ENCODE measurements at regions of chr16 and their contacts with region 1.

Region 1: DNA sequence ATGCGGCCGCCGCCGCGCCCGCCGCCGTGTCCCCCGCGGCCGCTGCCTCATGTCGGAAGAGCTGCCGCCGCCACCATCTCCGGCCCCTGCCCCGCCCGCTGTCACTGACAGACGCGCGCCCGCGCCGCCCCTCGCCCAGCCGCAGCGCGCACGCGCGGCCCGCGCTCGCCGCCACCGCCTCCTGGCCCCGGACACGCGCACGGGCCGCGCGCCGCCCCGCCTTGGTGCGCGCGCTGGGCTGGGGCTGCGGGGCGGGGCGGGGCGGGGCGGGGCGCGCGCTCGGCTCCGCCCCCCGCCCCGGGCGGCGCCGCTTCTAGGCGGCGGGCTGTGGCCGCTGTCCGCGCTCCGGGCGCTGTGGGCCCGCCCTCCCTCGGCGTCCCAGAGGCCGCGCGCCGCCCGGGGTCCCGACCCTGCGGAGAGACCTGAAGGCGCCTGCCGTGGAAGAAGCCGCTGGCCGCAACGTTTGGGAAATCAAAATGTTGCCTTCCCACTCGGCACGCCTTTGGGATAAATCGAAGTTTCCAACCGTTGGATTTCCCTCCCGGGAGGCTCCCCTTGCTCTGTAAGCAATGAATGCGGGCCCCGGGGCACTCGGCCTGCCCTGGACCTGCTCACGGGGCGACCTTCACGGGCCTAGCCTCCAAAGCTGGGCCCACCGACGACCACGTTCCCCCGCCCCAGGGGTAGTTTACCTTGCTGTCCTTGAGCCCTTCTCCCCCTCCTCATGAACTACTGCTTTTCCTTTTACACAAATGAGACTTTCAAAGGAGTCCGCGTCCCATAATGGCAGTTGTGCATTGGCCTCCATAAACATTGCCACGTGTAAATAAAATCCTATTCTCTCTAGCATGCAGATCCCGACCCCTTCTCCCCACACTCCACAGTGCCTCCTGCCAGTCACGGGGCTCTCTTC is at the start of gene ADCY9:
- DNase-seq: peak; percentile 86 to 90
- ATAC-seq: peak; percentile 67 to 80 (median 75)
- H3K4me3 ChIP-seq: peak within 1 kb of the TSS; percentile 83
- H3K27ac ChIP-seq: peak within 1 kb of the TSS; percentile 91
- H3K4me1 ChIP-seq: peaks cover 34% of the 10 kb centered on the region
- H3K27me3 ChIP-seq: no peaks in the 10 kb centered on the region
- CTCF ChIP-seq: no peak
- total RNA-seq, gene ADCY9: 43.6 to 77.8 (median 51.9) TPM

Region 2: DNA sequence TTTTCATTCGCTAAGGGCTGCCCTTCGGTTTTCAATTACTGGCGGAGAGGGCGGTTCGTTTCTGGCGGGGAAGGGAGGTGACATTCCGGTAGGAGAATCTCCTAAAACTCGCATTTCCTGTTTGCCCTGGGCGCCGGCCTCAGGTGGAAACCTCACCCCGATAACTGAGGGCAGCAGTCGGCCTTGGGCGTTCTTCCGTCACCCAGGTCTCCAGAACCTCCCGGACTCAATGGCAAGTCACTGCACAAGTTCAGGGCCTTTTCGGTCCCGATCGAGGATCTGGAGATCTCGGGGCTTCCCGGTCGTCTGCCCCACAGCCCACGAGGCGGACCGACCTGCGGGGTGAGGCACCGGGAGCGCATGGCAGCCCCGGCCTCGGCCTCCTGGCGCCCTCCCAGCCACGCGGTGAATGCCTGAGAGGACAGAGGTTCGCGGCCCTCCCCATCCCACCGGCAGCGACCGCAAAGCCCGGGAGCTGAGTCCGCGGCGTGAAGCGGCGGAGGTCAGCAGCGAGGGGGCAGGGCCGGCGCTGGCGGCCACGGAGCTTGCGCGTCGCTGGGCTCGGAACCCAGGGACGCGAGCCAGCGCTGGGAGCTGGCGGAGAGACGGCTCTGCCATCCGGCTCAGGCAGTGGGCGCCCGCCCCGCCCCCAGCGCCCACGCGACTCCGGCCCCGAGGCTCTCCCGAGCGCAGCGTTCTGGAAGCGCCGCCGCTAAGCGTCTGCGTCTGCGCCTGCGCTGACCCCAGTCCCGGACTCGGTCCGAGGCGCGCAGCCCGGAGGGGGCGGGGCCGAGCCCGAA is 66.8 kb after region 1 on chr16:
- intact Hi-C with region 1: loop called in 1 of 2 experiments (anchors 2 kb)
- DNase-seq: peak; percentile 94 to 97
- ATAC-seq: peak; percentile 89 to 95 (median 90)
- H3K4me3 ChIP-seq: peak overlapping the region; percentile 81
- H3K27ac ChIP-seq: peak overlapping the region; percentile 90
- H3K4me1 ChIP-seq: no peaks in the 10 kb centered on the region
- H3K27me3 ChIP-seq: no peaks in the 10 kb centered on the region
- CTCF ChIP-seq: no peak

Region 3: DNA sequence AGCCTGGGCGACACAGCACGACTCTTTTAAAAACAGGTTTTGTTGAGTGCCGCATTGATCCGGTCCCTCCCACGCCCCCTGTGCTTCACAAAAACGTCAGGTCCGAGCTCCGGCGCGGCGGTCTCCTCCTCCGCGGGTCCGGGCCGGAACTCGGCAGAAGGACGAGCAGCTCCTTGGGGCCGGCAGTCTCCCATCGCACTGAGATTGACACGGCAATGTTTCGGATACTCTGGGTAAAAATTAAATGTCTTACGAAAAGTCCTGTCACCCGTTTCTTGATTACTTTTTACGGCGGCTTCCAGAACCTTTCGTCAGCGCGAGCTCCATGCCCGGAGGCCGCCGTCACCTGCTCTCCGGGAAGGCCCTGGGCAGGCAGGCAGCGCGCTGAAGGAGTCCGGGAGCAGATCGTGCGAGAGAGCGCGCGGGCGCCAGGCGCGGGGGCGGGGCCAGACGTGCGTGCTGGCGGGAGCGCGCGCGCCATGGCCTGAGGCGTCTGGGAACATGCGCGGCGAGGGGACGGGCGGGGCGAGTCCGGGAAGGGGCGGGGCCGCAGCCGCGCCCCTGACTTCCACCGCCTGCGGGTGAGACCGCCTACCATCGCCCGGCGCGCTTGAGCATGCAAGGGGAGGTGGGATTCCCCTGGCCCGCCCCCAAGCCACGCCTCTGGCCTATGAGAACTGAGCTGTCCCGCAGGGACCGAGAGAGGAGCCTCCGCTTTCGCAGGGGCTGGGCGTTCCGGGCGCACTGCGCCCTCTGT is 137.0 kb after region 1 on chr16:
- intact Hi-C with region 1: loop called (anchors 5 kb)
- DNase-seq: peak; percentile 100
- ATAC-seq: peak; percentile 93 to 96 (median 94)
- H3K4me3 ChIP-seq: peak overlapping the region; percentile 71
- H3K27ac ChIP-seq: peak overlapping the region; percentile 91
- H3K4me1 ChIP-seq: peaks cover 7% of the 10 kb centered on the region
- H3K27me3 ChIP-seq: no peaks in the 10 kb centered on the region
- CTCF ChIP-seq: no peak